ENCODE measurements at regions of chr4 and their contacts with region 1.

Region 1: GRCh38 chr4:101944649-101945048 is 154.1 kb downstream of the BANK1 start:
- DNase-seq: no peak
- ATAC-seq: no peak
- H3K4me3 Mint-ChIP-seq: no peak overlapping the region
- H3K27ac Mint-ChIP-seq: peak overlapping the region; percentile 42
- H3K4me1 Mint-ChIP-seq: peaks cover 63% of the 10 kb centered on the region
- H3K27me3 Mint-ChIP-seq: no peaks in the 10 kb centered on the region
- CTCF ChIP-seq: no peak

Region 2: DNA sequence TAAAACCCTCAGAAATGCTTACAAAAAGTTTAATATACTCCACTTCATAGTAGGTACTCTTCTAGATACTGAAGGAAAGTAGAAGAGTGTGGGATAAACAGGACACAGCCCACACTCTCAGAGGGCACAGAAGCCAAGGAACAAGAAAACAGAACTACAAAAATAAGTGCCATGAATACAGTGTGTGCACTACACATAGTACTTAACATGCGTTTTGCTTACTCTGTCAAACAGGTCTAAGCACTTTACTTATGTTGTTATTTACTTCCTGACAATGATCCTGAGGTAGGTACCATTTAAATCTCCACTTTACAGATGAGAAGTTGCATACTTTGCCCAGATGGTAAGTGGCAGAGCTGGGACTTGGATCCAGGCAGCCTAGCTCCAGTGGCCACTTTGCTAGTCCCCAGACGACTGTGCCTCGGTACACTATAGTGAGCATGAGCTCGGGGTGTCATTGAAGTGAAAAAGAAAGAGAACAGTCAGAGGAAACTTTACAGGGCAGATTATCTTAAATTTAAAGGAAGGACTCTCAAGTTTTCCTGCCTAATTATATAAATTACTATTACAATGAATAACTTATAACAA is 33.8 kb before region 1 on chr4:
- CTCF ChIA-PET with region 1: no interaction called
- POLR2A ChIA-PET with region 1: no interaction called
- intact Hi-C with region 1: no loop called
- DNase-seq: no peak
- ATAC-seq: no peak
- H3K4me3 Mint-ChIP-seq: no peak overlapping the region
- H3K27ac Mint-ChIP-seq: peak overlapping the region; percentile 32
- H3K4me1 Mint-ChIP-seq: peaks cover 7% of the 10 kb centered on the region
- H3K27me3 Mint-ChIP-seq: no peaks in the 10 kb centered on the region
- CTCF ChIP-seq: no peak

Region 3: DNA sequence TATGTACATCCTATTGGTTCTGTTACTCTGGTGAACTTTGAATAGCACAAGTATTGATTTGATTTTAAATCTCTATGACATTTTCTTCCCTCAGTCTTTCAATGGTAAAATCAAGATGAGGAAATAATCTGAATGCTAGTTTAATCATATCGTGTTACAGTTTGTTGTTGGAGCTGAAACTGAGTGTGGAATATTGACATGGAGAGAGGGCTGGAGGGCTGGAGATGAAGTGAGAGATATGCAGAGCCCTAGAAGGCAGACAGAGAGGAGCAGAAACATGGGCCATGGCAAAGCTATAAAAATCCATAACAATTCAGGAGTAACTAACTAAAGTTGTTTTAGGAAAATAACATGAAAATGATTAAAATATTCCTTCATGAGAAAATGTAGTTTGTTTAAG is 13.0 kb before region 1 on chr4:
- CTCF ChIA-PET with region 1: no interaction called
- POLR2A ChIA-PET with region 1: interaction called, 4 read pairs
- intact Hi-C with region 1: loop called (anchors 2 kb)
- DNase-seq: no peak
- ATAC-seq: no peak
- H3K4me3 Mint-ChIP-seq: no peak overlapping the region
- H3K27ac Mint-ChIP-seq: peak overlapping the region; percentile 77
- H3K4me1 Mint-ChIP-seq: peaks cover 47% of the 10 kb centered on the region
- H3K27me3 Mint-ChIP-seq: no peaks in the 10 kb centered on the region
- CTCF ChIP-seq: no peak

Region 4: DNA sequence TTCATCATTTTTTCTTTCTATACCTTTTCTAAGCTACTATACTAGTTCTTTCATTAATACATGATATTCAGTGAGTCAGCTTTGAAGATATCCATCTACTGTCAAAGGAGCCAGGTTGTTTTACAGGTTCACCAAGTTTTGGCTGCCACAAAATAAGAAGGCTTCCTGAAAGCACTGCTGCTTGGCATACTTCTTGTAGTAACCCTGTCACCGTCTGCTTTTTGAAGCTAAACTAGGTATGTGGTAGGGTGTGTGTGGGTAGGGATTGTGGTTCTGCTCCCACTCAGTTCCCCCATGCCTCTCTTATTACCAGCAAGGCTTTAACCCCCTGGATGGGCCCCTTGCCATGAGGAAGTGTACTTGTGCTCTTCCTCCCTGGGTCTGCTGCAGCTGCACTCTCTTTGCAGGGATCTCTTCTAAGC is 37.1 kb after region 1 on chr4:
- CTCF ChIA-PET with region 1: no interaction called
- POLR2A ChIA-PET with region 1: no interaction called
- intact Hi-C with region 1: no loop called
- DNase-seq: no peak
- ATAC-seq: peak; percentile 42
- H3K4me3 Mint-ChIP-seq: no peak overlapping the region
- H3K27ac Mint-ChIP-seq: peak overlapping the region; percentile 73
- H3K4me1 Mint-ChIP-seq: peaks cover 62% of the 10 kb centered on the region
- H3K27me3 Mint-ChIP-seq: no peaks in the 10 kb centered on the region
- CTCF ChIP-seq: no peak

Region 5: GRCh38 chr4:102500696-102501446 is 556.2 kb after region 1 on chr4 and contains the start of gene NFKB1:
- CTCF ChIA-PET with region 1: no interaction called
- POLR2A ChIA-PET with region 1: no interaction called
- intact Hi-C with region 1: no loop called
- DNase-seq: peak; percentile 76
- ATAC-seq: peak; percentile 71
- H3K4me3 Mint-ChIP-seq: peak within 1 kb of the TSS; percentile 97
- H3K27ac Mint-ChIP-seq: peak within 1 kb of the TSS; percentile 95
- H3K4me1 Mint-ChIP-seq: peaks cover 31% of the 10 kb centered on the region
- H3K27me3 Mint-ChIP-seq: no peaks in the 10 kb centered on the region
- CTCF ChIP-seq: no peak
- total RNA-seq, gene NFKB1: 274 and 308 TPM in 2 replicates

Measured in activated B cell treated with CpG ODN at 0.5 μM for 24 hours (primary cell).